Uterus (tissue), 4 donors: ENCODE measurements at regions of chr5 and their contacts with region 1.

Region 1: GRCh38 chr5:134577796-134578363 is 52.4 kb downstream of the JADE2 start:
- DNase-seq: peak; percentile 80 to 84
- H3K4me3 ChIP-seq: no peak overlapping the region
- H3K27ac ChIP-seq: no peak overlapping the region
- H3K4me1 ChIP-seq: peaks cover 0 to 8% of the 10 kb centered on the region in 2 donors
- H3K27me3 ChIP-seq: no peaks in the 10 kb centered on the region
- CTCF ChIP-seq: peak; percentile 72 to 84 (median 80)
- POLR2A ChIP-seq: no peak

Region 2: GRCh38 chr5:134380346-134380745 is 197.5 kb before region 1 on chr5:
- intact Hi-C with region 1: loop called (anchors 10 kb)
- DNase-seq: no peak
- H3K4me3 ChIP-seq: no peak overlapping the region
- H3K27ac ChIP-seq: no peak overlapping the region
- H3K4me1 ChIP-seq: no peaks in the 10 kb centered on the region
- H3K27me3 ChIP-seq: no peaks in the 10 kb centered on the region
- CTCF ChIP-seq: no peak
- POLR2A ChIP-seq: no peak